ENCODE measurements at regions of chr1 and their contacts with region 1.

Region 1: GRCh38 chr1:162230096-162230495 is 146.6 kb downstream of the SPATA46 start:
- DNase-seq: peak in 1 of 2 experiments; percentile 25
- H3K4me3 ChIP-seq: no peak overlapping the region
- H3K4me3 Mint-ChIP-seq: no peak overlapping the region
- H3K27ac Mint-ChIP-seq: no peak overlapping the region
- H3K4me1 ChIP-seq: no peaks in the 10 kb centered on the region
- H3K4me1 Mint-ChIP-seq: peaks cover 11% of the 10 kb centered on the region
- H3K27me3 ChIP-seq: no peaks in the 10 kb centered on the region
- H3K27me3 Mint-ChIP-seq: no peaks in the 10 kb centered on the region
- CTCF ChIP-seq: no peak

Region 2: GRCh38 chr1:162193815-162194214 is 36.3 kb before region 1 on chr1:
- CTCF ChIA-PET with region 1: no interaction called
- POLR2A ChIA-PET with region 1: no interaction called
- intact Hi-C with region 1: no loop called
- DNase-seq: no peak
- H3K4me3 ChIP-seq: no peak overlapping the region
- H3K4me3 Mint-ChIP-seq: no peak overlapping the region
- H3K27ac Mint-ChIP-seq: no peak overlapping the region
- H3K4me1 ChIP-seq: peaks cover 69% of the 10 kb centered on the region
- H3K4me1 Mint-ChIP-seq: peaks cover 26% of the 10 kb centered on the region
- H3K27me3 ChIP-seq: no peaks in the 10 kb centered on the region
- H3K27me3 Mint-ChIP-seq: no peaks in the 10 kb centered on the region
- CTCF ChIP-seq: no peak

Region 3: DNA sequence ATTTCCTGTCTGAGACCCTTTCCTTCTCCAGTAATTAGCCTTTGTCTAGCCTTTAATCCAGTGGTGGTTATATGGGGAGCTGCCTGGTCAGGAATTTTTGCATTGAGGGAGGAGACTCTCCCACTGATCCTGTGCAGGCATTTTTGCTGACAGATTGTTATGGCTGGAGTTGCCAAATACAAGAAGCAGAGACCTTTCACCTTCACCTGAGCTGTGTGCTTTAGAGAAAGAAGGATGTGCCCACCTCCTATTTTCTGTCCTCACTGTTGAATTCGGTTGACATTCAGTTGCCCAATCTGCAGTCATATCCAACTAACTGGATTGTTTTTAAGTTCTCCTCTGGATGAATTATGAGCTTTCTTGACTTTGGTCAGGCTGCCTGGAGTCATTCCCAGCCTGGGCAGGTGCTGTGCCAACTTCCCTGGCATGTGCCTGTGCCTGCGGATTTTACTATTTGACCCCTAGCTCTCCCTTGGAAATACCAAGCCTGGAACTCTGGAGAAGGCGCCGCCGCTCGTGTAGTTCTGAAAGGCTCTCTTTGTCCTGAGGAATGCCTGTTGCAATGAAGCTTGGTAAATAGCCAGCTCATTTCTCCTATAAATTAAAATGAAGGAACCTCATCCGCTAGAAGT is 16.7 kb before region 1 on chr1:
- CTCF ChIA-PET with region 1: no interaction called
- POLR2A ChIA-PET with region 1: no interaction called
- intact Hi-C with region 1: no loop called
- DNase-seq: no peak
- H3K4me3 ChIP-seq: no peak overlapping the region
- H3K4me3 Mint-ChIP-seq: no peak overlapping the region
- H3K27ac Mint-ChIP-seq: no peak overlapping the region
- H3K4me1 ChIP-seq: no peaks in the 10 kb centered on the region
- H3K4me1 Mint-ChIP-seq: peaks cover 11% of the 10 kb centered on the region
- H3K27me3 ChIP-seq: no peaks in the 10 kb centered on the region
- H3K27me3 Mint-ChIP-seq: no peaks in the 10 kb centered on the region
- CTCF ChIP-seq: no peak

Region 4: GRCh38 chr1:162276493-162276892 is 46.4 kb after region 1 on chr1:
- CTCF ChIA-PET with region 1: no interaction called
- POLR2A ChIA-PET with region 1: no interaction called
- intact Hi-C with region 1: loop called (anchors 5 kb)
- DNase-seq: peak in 1 of 2 experiments; percentile 48
- H3K4me3 ChIP-seq: no peak overlapping the region
- H3K4me3 Mint-ChIP-seq: no peak overlapping the region
- H3K27ac Mint-ChIP-seq: no peak overlapping the region
- H3K4me1 ChIP-seq: no peaks in the 10 kb centered on the region
- H3K4me1 Mint-ChIP-seq: no peaks in the 10 kb centered on the region
- H3K27me3 ChIP-seq: no peaks in the 10 kb centered on the region
- H3K27me3 Mint-ChIP-seq: no peaks in the 10 kb centered on the region
- CTCF ChIP-seq: peak; percentile 50 to 51

Region 5: GRCh38 chr1:162292422-162292849 is 62.3 kb after region 1 on chr1:
- CTCF ChIA-PET with region 1: no interaction called
- POLR2A ChIA-PET with region 1: no interaction called
- intact Hi-C with region 1: no loop called
- DNase-seq: no peak
- H3K4me3 ChIP-seq: no peak overlapping the region
- H3K4me3 Mint-ChIP-seq: no peak overlapping the region
- H3K27ac Mint-ChIP-seq: no peak overlapping the region
- H3K4me1 ChIP-seq: no peaks in the 10 kb centered on the region
- H3K4me1 Mint-ChIP-seq: no peaks in the 10 kb centered on the region
- H3K27me3 ChIP-seq: no peaks in the 10 kb centered on the region
- H3K27me3 Mint-ChIP-seq: no peaks in the 10 kb centered on the region
- CTCF ChIP-seq: no peak

Measured in Caco-2 (cell line).